ENCODE measurements at regions of chr5 and their contacts with region 1.

Region 1: GRCh38 chr5:91101600-91102379 is 281.3 kb downstream of the ARRDC3 start:
- DNase-seq: peak; percentile 90
- H3K4me3 ChIP-seq: no peak overlapping the region
- H3K27ac ChIP-seq: peak overlapping the region in 1 of 4 donors; percentile 27
- H3K4me1 ChIP-seq: peaks cover 0 to 29% (median 13%) of the 10 kb centered on the region in 4 donors
- H3K27me3 ChIP-seq: no peaks in the 10 kb centered on the region
- CTCF ChIP-seq: peak; percentile 75 to 93 (median 90)
- EP300 ChIP-seq: no peak
- POLR2A ChIP-seq: no peak

Region 2: DNA sequence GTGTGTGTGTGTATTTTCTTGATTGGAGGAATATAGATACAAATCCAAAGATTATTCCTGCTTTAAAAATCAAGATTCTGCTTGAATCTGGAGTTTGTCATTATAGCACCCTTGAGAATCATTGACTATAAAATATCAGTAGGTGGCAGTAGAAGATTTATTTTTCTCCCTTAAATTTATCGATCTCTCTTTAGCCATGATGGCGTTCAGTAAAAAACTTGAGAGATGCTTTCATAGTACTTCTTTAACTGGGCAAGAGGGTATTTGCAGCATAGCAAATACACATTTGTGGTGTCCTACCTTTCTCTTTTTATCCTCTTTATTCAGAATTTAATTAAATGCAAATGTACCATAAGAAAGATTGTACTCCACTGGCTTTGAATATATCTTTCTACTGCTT is 235.5 kb before region 1 on chr5:
- intact Hi-C with region 1: loop called (anchors 5 kb)
- DNase-seq: no peak
- H3K4me3 ChIP-seq: no peak overlapping the region
- H3K27ac ChIP-seq: no peak overlapping the region
- H3K4me1 ChIP-seq: peaks cover 0 to 4% (median 0%) of the 10 kb centered on the region in 4 donors
- H3K27me3 ChIP-seq: no peaks in the 10 kb centered on the region
- CTCF ChIP-seq: peak; percentile 17 to 51 (median 32)
- EP300 ChIP-seq: no peak
- POLR2A ChIP-seq: no peak

Region 3: DNA sequence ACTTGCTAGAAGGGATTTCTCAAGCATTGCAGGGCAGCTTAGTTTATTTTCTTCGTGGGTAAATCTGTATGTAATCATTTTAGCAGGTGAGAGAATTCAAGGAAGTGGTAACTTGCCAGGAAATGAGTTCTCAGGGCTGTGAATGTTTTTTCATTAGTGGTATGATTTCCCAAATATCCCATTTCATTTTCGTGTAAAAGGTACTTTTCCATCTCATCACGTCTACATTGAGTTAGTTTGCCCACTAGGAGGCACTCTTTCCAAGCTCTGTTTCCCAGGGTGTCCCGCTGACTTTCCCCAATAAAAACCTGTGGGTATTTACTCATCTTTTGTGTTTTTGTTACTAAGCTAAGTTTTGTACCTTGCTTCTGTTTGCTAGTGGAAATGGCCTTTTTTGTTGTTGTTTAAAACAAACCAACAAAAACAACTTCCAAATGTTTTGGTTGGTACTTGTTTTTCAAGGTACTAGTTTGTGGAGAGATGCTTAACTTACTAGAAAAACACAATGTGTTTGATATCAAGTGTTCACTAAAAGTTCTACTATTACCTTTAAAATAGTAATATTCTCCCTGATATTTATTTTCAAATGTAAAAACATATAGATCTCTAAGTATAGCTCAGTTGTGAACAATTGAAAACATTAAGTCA is 169.6 kb before region 1 on chr5:
- intact Hi-C with region 1: loop called (anchors 1 kb)
- DNase-seq: peak; percentile 75
- H3K4me3 ChIP-seq: no peak overlapping the region
- H3K27ac ChIP-seq: no peak overlapping the region
- H3K4me1 ChIP-seq: peaks cover 0 to 17% (median 11%) of the 10 kb centered on the region in 4 donors
- H3K27me3 ChIP-seq: no peaks in the 10 kb centered on the region
- CTCF ChIP-seq: peak; percentile 71 to 78 (median 76)
- EP300 ChIP-seq: no peak
- POLR2A ChIP-seq: no peak

Region 4: GRCh38 chr5:91280362-91281269 is 178.8 kb after region 1 on chr5:
- intact Hi-C with region 1: loop called (anchors 5 kb)
- DNase-seq: peak; percentile 97
- H3K4me3 ChIP-seq: peak overlapping the region; percentile 35 to 61 (median 58)
- H3K27ac ChIP-seq: peak overlapping the region; percentile 87 to 95 (median 88)
- H3K4me1 ChIP-seq: peaks cover 0 to 41% (median 21%) of the 10 kb centered on the region in 4 donors
- H3K27me3 ChIP-seq: no peaks in the 10 kb centered on the region
- CTCF ChIP-seq: no peak
- EP300 ChIP-seq: peak in 2 of 4 donors; percentile 50 to 70
- POLR2A ChIP-seq: peak; percentile 52 to 62

Region 5: DNA sequence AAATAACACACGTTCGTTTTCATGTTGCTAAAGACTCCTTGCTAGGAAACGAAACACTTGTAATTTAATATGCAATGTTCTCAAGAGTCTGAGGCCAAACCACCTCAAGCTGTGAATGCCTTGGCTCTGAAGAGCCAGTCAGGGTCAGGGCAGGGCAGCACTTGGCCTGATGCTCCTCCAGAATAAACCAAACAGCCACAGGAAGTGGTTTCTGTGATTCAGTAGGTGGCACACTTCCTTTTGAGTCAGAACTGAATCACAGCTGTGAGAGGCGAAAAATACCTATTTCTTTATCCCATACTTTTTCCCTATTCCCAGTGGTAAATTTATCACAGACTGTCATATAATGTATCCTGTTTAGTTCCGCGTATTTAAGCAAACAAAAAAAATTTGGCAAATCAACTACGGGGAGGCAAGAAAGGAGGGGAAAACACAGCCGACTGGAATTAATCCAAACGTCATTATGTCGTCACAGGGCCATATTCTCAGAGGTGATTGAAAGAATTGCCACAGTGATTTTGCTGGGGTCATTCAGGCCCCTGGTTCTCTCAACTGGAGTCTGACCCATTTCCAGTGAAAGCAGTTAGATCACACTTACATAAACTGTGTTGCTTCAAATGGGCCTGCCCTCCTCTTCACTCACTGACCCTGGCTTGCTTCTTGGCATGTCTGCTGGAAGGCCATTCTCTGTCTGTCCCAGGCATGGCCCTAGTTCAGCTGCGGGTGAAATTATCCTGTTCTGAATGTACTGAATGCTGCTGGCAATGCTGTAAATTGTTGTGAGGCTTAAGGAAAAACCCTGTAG is 210.1 kb after region 1 on chr5:
- intact Hi-C with region 1: loop called (anchors 5 kb)
- DNase-seq: peak; percentile 88
- H3K4me3 ChIP-seq: no peak overlapping the region
- H3K27ac ChIP-seq: peak overlapping the region; percentile 75 to 84 (median 80)
- H3K4me1 ChIP-seq: peaks cover 0 to 48% (median 41%) of the 10 kb centered on the region in 4 donors
- H3K27me3 ChIP-seq: no peaks in the 10 kb centered on the region
- CTCF ChIP-seq: no peak
- EP300 ChIP-seq: peak in 3 of 4 donors; percentile 21 to 64 (median 51)
- POLR2A ChIP-seq: no peak

Measured in sigmoid colon (tissue), 7 donors.